ENCODE measurements at regions of chr3 and their contacts with region 1.

Region 1: DNA sequence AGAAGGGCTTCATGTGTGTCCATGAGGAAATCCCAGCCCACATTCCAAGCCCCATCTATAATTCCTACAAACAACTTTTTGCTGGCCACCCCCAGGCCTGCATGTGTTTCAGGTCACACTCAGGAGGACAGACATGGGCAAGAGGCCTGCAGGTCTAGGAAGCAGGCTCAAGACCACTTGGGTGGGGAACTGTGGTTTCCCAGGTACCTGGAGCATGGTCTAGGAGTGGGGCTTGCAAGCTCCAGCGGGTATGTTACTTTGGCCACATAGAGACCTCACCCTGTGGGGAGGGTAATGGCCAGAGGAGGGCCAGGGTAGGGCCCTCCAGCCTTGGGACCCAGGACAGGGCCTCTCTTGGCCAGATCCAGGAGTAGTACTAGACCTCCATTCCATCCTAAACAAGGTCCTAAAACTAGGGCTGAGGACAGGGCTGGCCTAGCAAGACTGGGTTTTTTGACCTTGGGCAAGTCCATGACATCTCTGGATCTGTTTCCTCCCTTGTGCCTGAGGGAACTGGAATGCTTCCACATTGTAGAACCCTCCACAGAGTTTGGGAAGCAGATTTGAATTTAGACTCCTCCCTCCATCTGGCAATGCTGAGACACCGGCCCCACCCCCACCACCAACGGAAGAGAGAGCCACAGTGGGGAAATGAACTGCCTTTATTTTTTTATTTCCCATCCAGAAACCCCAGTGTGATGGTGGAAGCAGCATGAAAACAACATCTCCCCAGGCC is 22.3 kb downstream of the EAF1 start:
- DNase-seq: no peak
- H3K4me3 ChIP-seq: no peak overlapping the region
- H3K27ac ChIP-seq: no peak overlapping the region
- H3K4me1 ChIP-seq: no peaks in the 10 kb centered on the region
- CTCF ChIP-seq: no peak

Region 2: GRCh38 chr3:15007681-15008141 is 441.9 kb before region 1 on chr3:
- CTCF ChIA-PET with region 1: no interaction called
- POLR2A ChIA-PET with region 1: interaction called, 10 read pairs
- intact Hi-C with region 1: no loop called
- DNase-seq: no peak
- H3K4me3 ChIP-seq: no peak overlapping the region
- H3K27ac ChIP-seq: no peak overlapping the region
- H3K4me1 ChIP-seq: no peaks in the 10 kb centered on the region
- CTCF ChIP-seq: no peak

Region 3: GRCh38 chr3:15256861-15257341 is 192.8 kb before region 1 on chr3:
- CTCF ChIA-PET with region 1: no interaction called
- POLR2A ChIA-PET with region 1: no interaction called
- intact Hi-C with region 1: no loop called
- DNase-seq: no peak
- H3K4me3 ChIP-seq: no peak overlapping the region
- H3K27ac ChIP-seq: no peak overlapping the region
- H3K4me1 ChIP-seq: no peaks in the 10 kb centered on the region
- CTCF ChIP-seq: no peak

Measured in OCI-LY7 (cell line).